AG04449 (cell line): ENCODE measurements at regions of chr11 and their contacts with region 1.

Region 1: DNA sequence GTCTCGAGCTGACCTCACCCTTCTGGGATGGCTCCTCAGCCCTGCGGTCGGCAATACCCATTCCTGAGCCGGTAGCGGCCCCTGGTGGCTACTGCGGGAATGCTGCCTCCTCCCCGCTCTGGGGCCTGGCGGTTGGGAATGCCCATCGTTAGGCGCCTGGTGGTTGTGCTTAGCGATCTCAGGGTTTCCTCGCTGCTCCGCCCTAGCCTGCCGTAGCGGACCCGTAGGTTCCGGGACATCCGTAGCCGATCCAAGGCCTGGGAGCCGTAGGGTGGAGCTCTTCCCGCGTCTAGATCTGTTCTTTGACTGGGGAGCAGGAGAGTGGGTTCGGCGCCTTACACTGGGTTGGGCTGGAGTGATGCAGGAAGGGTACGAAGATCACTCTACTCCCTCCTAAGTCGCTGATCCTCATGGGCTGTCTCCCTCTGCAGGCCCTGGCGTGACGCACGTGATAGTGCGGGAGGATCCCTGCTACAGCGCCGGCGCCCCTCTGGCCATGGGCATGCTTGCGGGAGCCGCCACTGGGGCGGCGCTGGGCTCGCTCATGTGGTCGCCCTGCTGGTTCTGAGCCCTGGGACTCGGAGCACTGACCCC is 14.8 kb downstream of the PLEKHB1 start:
- DNase-seq: peak; percentile 16
- H3K4me3 ChIP-seq: peak overlapping the region; percentile 54
- CTCF ChIP-seq: peak; percentile 98

Region 2: GRCh38 chr11:72293910-72294615 is 1367.1 kb before region 1 on chr11:
- CTCF ChIA-PET with region 1: no interaction called
- POLR2A ChIA-PET with region 1: no interaction called
- DNase-seq: no peak
- H3K4me3 ChIP-seq: no peak overlapping the region
- CTCF ChIP-seq: no peak

Region 3: DNA sequence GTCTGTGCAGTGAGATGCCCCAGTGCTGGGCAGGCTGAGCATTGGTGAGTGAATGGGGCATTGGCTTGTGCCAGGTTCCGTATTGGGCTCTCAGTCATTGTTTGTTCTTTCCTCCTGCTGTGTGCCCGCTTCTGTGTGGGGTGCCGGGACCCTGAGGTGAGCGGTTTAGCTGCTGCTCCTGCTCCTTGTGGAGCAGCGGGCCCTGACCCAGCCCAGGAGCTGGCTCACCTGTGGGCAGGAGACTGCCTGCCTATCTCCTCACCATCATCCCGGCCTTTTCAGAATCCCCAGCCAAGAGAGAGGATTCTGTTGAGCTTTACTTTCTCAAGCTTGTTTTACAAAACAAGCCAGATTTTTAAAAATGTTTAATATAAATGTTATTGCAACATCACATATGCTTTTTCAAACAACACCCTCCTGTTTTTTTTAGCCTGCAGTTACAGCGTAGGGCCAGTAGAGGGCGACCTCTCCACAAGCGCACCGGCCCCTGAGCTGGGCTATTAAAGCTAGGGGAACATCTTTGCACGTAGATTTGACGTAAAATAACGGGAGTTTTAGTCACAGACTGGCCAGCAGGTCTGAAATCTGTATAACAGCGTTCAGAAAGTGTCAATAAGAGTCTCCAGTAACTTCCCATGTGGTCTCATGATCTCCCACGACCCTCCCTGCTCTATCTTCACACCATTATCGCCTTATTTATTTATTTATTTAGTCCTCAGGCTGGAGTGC is 310.1 kb before region 1 on chr11:
- CTCF ChIA-PET with region 1: interaction called, 145 read pairs
- POLR2A ChIA-PET with region 1: interaction called, 4 read pairs
- DNase-seq: no peak
- H3K4me3 ChIP-seq: no peak overlapping the region
- CTCF ChIP-seq: peak; percentile 78

Region 4: GRCh38 chr11:73393479-73394380 is 267.4 kb before region 1 on chr11:
- CTCF ChIA-PET with region 1: interaction called, 248 read pairs
- POLR2A ChIA-PET with region 1: no interaction called
- DNase-seq: no peak
- H3K4me3 ChIP-seq: no peak overlapping the region
- CTCF ChIP-seq: peak; percentile 86

Region 5: DNA sequence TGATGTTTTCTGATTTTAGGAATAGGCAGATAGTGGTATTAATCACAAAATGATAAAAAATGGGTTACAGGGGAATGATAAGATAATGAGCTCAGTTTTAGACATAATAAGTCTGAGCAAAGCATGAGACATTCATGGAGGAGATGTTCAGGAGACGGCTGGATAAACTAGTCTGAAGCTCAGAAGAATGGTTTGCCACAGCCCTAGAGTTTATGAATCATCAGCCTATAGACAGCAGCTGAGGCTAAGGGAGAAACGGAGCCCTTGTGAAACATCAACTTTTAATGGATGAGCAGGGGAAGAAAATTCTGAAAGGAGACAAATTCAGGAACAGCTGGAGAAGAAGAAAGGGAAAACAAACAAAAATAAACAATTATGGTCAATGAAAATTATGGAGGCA is 197.8 kb before region 1 on chr11:
- CTCF ChIA-PET with region 1: interaction called, 28 read pairs
- POLR2A ChIA-PET with region 1: no interaction called
- DNase-seq: peak; percentile 44
- H3K4me3 ChIP-seq: no peak overlapping the region
- CTCF ChIP-seq: no peak

Region 6: DNA sequence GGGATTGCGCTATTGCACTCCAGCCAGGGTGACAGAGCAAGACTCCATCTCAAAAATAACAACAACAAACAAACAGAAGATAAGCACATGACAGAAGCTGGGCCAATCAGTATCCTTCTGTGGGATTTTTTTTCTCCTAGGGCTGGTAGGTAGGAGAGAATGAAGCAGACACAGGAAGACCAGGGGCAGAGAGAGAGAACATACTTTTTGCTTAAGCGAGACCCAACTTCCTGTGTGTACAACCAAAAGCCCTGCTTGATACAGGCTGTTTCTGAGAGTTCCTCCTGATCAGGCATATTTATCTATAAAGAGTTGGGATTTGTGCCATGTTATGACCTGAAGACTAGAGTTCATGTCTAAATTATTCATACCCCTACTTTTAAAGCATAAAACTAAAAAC is 27.1 kb before region 1 on chr11:
- CTCF ChIA-PET with region 1: interaction called, 24 read pairs
- POLR2A ChIA-PET with region 1: no interaction called
- DNase-seq: no peak
- H3K4me3 ChIP-seq: no peak overlapping the region
- CTCF ChIP-seq: no peak

Region 7: DNA sequence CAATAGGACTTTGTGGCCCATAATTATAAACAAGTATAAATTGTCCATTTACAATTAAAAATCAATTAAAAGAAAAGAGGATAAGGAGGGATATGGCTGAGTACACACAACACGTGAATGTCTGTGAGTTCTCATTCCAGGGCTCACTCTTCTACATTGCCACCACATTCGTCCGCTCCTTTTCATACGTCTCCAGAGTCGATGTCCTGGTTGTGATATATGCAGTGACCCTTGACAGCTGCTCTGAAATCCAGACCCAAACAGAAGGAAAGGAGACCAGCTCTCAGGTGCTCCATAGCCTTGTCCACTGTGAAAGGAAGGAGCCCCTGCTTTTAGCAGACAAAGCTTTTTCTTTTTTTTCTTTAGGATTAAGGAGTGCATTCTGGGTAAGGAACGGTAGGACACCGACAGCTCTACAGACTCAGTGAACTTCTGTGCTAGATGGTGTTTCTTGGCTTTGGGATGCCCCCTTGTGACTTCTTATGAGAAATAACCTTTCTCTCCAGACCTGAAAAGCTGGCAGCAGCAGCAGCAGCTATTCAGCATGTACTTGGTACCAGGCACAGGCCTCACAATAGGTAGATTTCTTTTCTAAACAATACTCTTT is 270.0 kb after region 1 on chr11:
- CTCF ChIA-PET with region 1: interaction called, 20 read pairs
- POLR2A ChIA-PET with region 1: no interaction called
- DNase-seq: peak; percentile 29
- H3K4me3 ChIP-seq: no peak overlapping the region
- CTCF ChIP-seq: peak; percentile 49